ENCODE measurements at regions of chr5 and their contacts with region 1.

Region 1: GRCh38 chr5:149345147-149345875 is at the start of gene GRPEL2:
- DNase-seq: peak; percentile 80 to 87 (median 82)
- H3K4me3 ChIP-seq: peak within 1 kb of the TSS; percentile 83 to 92
- H3K4me3 Mint-ChIP-seq: peak within 1 kb of the TSS; percentile 91 to 99 (median 96)
- H3K27ac ChIP-seq: peak within 1 kb of the TSS; percentile 78
- H3K27ac Mint-ChIP-seq: peak within 1 kb of the TSS; percentile 87 to 99 (median 93)
- H3K4me1 ChIP-seq: peaks cover 53% of the 10 kb centered on the region
- H3K4me1 Mint-ChIP-seq: peaks cover 36 to 67% (median 55%) of the 10 kb centered on the region in 4 donors
- H3K27me3 ChIP-seq: no peaks in the 10 kb centered on the region
- H3K27me3 Mint-ChIP-seq: no peaks in the 10 kb centered on the region
- total RNA-seq, gene GRPEL2: 39.4 to 41.9 TPM

Region 2: DNA sequence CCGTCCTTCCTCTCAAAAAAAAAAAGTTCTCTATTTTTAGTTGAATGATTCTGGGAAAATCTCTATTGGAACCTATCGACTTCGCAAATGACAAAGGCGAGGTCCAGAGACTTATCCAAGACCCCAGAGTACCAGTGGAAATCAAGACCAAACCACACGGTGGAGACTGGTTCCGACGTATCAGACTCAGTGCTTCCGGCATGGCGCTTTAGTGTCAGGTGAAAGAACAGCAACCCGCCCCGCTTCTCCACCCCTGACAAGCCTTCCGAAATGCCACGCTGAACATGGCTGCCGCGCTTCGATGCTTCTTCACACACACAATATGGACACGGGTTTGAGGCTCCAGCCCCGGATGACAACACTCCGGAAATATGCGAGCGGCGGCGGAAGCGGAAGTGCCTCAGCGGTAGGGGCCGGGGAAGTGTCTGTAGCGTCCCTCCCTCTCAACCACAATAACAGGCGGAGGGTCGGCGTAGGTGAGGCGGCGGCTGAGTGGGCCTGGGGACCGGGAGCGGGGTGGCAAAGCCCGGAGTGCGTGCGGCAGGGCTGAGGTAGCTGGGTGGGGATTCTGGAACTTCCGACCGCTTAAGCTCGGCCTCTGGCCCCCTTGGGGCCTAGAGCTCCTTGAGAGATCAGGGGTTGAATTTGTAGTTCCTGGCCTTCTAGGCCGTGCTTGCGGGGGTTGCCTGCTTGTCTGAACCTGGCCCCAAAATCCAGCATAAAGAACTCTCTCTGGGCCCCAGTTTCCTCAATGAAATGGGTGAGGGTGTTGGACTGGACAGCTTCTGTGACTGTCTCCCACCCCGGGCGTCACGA is 961.5 kb before region 1 on chr5 and contains the start of gene FBXO38:
- CTCF ChIA-PET with region 1: no interaction called
- POLR2A ChIA-PET with region 1: no interaction called
- intact Hi-C with region 1: loop called (anchors 10 kb)
- DNase-seq: peak; percentile 97 to 99 (median 97)
- H3K4me3 ChIP-seq: peak within 1 kb of the TSS; percentile 82 to 86
- H3K4me3 Mint-ChIP-seq: peak within 1 kb of the TSS; percentile 86 to 97 (median 92)
- H3K27ac ChIP-seq: peak within 1 kb of the TSS; percentile 93
- H3K27ac Mint-ChIP-seq: peak within 1 kb of the TSS; percentile 90 to 100 (median 99)
- H3K4me1 ChIP-seq: peaks cover 47% of the 10 kb centered on the region
- H3K4me1 Mint-ChIP-seq: peaks cover 42 to 71% (median 59%) of the 10 kb centered on the region in 4 donors
- H3K27me3 ChIP-seq: no peaks in the 10 kb centered on the region
- H3K27me3 Mint-ChIP-seq: no peaks in the 10 kb centered on the region
- total RNA-seq, gene FBXO38: 77.3 to 78.3 TPM

Region 3: DNA sequence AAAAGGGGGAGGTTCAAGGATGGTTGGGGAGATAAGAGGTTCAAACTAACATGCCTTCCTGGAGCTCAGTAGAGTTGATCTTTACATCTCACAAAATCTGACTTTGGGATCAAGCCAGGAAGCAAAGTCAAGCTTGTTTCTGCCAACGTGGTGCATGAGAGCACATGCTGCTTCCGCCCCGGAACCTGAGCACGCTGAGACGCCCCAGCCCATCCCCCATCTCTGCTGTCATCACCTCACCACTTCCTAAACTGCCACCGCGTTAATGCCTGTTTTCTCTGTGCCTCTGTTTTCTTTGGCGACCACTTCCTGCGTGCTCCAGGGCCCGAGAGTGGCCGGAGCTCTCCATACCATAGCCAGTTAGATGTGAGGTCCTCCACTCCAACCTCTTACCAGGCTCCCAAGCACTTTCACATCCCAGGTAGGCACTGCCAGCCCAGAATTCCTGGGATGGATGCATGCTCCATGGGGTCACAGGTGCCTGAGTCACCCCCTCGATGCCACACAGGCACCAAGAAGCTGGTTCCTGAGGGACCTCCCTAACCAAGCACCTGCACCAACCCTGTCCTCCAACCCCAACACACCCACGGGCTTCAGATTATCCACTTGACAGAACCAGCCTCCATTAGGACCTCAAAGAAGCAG is 104.8 kb before region 1 on chr5:
- CTCF ChIA-PET with region 1: no interaction called
- POLR2A ChIA-PET with region 1: interaction called, 7 read pairs
- intact Hi-C with region 1: loop called (anchors 2 kb)
- DNase-seq: peak; percentile 78 to 91 (median 88)
- H3K4me3 ChIP-seq: peak overlapping the region; percentile 26 to 34
- H3K4me3 Mint-ChIP-seq: peak overlapping the region; percentile 25 to 80 (median 64)
- H3K27ac ChIP-seq: peak overlapping the region; percentile 49
- H3K27ac Mint-ChIP-seq: peak overlapping the region; percentile 81 to 95 (median 89)
- H3K4me1 ChIP-seq: peaks cover 35% of the 10 kb centered on the region
- H3K4me1 Mint-ChIP-seq: peaks cover 29 to 57% (median 37%) of the 10 kb centered on the region in 4 donors
- H3K27me3 ChIP-seq: no peaks in the 10 kb centered on the region
- H3K27me3 Mint-ChIP-seq: no peaks in the 10 kb centered on the region

Region 4: DNA sequence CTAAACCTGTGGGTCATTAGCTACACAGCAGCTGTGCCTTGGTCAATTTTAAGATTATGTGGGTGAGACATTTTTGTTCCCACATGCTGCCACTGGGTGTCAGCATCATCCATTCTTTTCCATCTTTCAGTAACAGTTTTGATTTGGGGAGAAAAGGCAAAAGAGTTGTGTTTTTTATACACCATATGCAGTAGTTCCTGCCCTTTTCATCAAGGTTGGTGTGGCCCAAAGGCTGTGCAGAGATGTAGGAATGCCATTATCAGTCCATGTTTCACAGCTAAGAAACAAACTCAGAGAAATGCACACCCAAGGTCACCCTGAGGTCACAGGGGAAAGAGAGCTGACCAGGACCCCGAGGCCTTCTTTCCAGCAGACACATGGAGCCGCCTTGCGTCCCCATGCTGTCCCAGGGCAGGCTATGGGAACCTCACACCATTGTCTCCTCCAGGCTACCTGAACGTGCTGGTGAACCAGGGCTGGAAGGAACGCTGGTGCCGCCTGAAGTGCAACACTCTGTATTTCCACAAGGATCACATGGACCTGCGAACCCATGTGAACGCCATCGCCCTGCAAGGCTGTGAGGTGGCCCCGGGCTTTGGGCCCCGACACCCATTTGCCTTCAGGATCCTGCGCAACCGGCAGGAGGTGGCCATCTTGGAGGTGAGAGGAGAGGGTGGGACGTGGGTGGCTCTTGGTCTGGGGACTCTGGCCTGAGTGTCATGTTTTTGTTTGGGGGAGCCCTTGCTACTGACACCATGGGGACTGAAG is 27.8 kb before region 1 on chr5:
- CTCF ChIA-PET with region 1: interaction called, 27 read pairs
- POLR2A ChIA-PET with region 1: interaction called, 3 read pairs
- intact Hi-C with region 1: loop called (anchors 1 kb)
- DNase-seq: peak in 4 of 5 donors; percentile 52 to 66 (median 56)
- H3K4me3 ChIP-seq: no peak overlapping the region
- H3K4me3 Mint-ChIP-seq: no peak overlapping the region
- H3K27ac ChIP-seq: no peak overlapping the region
- H3K27ac Mint-ChIP-seq: no peak overlapping the region
- H3K4me1 ChIP-seq: no peaks in the 10 kb centered on the region
- H3K4me1 Mint-ChIP-seq: peaks cover 0 to 3% (median 1%) of the 10 kb centered on the region in 4 donors
- H3K27me3 ChIP-seq: no peaks in the 10 kb centered on the region
- H3K27me3 Mint-ChIP-seq: no peaks in the 10 kb centered on the region

Region 5: DNA sequence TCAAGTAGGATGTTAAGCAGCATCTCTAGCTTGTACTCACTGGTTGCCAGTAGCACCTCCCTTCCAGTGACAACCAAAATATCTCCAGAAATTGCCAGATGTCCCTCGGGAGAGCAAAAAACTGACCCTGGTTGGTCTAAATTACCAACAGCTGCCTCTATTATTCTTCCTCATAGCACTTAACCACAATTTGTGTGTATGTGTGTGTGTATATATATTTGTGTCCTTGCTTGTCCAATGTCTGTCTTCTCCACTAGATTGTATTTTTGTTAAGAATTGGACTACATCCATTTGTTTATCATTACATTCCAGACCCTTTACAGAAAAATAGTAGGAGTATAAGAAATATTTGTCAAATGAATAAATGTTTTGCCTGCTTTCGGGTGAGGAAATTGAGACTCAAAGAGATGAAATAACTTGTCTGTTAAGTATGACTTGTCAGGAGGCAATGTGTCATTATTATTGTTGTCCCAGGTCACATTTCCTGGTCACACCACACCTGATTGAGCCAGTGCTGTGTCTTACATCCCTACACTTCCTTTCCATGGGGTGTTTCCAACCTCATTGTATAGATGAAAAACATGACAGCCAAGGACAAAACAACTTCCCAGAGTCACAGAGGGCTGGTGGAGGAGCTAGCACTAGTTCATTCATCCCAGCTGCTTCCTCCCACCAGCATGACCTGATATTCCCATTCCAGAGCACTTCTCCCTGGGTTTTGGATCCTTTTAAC is 11.4 kb before region 1 on chr5:
- CTCF ChIA-PET with region 1: interaction called, 7 read pairs
- POLR2A ChIA-PET with region 1: interaction called, 11 read pairs
- intact Hi-C with region 1: no loop called
- DNase-seq: no peak
- H3K4me3 ChIP-seq: no peak overlapping the region
- H3K4me3 Mint-ChIP-seq: no peak overlapping the region
- H3K27ac ChIP-seq: no peak overlapping the region
- H3K27ac Mint-ChIP-seq: peak overlapping the region in 1 of 7 donors; percentile 24
- H3K4me1 ChIP-seq: no peaks in the 10 kb centered on the region
- H3K4me1 Mint-ChIP-seq: peaks cover 0 to 3% (median 0%) of the 10 kb centered on the region in 4 donors
- H3K27me3 ChIP-seq: no peaks in the 10 kb centered on the region
- H3K27me3 Mint-ChIP-seq: no peaks in the 10 kb centered on the region

Region 6: DNA sequence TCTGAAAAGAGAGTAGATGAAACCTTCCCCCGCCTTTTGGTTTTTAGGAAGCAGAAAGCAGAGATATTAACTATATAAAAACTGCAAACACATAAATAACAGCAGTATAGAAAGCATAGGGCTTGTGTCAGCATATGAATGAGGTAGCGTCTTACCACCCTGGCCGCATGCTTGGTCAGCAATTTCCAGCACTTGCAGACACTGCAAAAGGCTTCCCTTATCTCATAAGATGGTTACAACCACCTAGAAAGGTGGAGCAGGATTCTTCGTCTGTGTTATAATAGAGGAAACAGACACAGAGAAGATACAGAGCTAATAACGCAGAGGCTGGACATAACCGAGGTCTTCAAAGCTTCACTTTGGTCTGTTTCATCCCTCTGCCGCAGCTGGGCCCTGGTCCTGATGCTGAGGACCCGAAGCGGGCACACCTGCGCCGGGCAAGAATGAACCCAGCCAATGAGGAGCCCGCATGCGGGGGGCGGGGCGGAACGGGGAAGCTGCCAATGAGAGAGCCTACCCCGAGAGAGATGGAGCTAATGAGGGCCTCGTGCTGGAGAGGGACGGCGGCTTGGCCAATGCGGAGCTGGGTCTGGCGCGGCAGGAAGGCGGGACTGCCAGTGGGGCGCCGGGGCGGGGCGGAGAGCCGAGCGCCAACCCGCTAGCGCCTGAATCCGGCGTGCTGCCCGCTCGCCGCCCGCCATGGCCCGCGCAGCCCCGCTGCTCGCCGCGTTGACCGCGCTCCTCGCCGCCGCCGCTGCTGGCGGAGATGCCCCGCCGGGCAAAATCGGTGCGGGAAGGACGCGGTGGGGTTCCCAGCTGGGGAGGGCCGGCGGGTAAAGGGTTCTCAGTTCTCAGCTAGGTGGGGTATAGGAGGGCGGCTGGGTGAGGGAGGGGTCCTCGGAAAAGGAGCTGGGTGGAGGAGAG is 12.3 kb after region 1 on chr5 and contains the start of gene PCYOX1L:
- CTCF ChIA-PET with region 1: interaction called, 14 read pairs
- POLR2A ChIA-PET with region 1: interaction called, 289 read pairs
- intact Hi-C with region 1: loop called (anchors 1 kb)
- DNase-seq: peak; percentile 91 to 97 (median 95)
- H3K4me3 ChIP-seq: peak within 1 kb of the TSS; percentile 70 to 82
- H3K4me3 Mint-ChIP-seq: peak within 1 kb of the TSS; percentile 94 to 98 (median 95)
- H3K27ac ChIP-seq: peak within 1 kb of the TSS; percentile 75
- H3K27ac Mint-ChIP-seq: peak within 1 kb of the TSS; percentile 92 to 98 (median 96)
- H3K4me1 ChIP-seq: peaks cover 71% of the 10 kb centered on the region
- H3K4me1 Mint-ChIP-seq: peaks cover 46 to 83% (median 63%) of the 10 kb centered on the region in 4 donors
- H3K27me3 ChIP-seq: no peaks in the 10 kb centered on the region
- H3K27me3 Mint-ChIP-seq: no peaks in the 10 kb centered on the region
- total RNA-seq, gene PCYOX1L: 40.4 to 43.9 TPM

Region 7: DNA sequence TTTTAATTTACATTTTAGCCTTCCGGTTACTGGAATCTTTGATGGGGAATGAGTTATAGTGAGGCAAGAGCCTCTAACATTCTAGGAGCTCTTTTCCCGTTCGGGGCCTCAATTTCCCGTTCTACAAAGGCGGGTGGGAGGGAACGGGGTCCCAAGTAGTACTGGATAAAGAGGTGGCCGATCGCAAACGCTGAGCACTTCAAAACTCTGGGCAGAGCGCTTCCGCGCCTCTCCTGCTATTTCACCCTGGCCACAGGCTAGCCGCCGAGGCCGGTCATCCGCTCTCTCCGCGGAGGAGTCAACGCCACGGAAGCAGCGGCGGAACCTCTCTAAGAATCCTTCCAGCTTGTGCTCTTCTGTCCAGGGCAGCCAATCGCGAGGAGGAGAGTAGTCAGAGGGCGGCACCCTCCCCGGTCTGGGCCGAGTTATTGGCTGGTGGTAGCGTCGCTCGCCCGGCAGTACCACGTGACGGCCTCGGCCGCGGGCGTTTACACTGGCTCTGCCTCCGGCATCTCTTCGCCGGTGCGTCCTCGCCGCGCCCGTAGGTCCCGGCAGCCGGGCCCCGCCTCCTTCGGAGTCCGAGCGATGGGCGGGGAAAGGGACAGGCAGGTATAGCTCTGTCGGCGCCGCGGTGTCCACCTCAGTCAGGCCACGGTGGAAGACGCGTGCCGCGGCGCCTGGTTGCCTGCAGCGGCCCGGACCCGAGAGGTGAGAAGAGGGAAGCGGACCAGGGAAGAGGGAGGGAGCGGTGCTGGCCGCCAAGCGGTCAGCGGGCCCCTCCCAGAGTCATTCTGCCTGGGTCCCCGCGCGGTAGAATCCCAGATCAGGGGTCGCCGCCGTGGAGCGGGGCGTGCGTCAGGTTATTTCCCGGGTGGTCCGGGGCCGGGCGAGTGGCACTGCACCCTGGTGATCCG is 615.2 kb after region 1 on chr5 and contains the start of gene SLC26A2:
- CTCF ChIA-PET with region 1: no interaction called
- POLR2A ChIA-PET with region 1: no interaction called
- intact Hi-C with region 1: loop called (anchors 10 kb)
- DNase-seq: peak; percentile 90 to 96 (median 91)
- H3K4me3 ChIP-seq: peak within 1 kb of the TSS; percentile 80 to 84
- H3K4me3 Mint-ChIP-seq: peak within 1 kb of the TSS; percentile 93 to 99 (median 98)
- H3K27ac ChIP-seq: peak within 1 kb of the TSS; percentile 72
- H3K27ac Mint-ChIP-seq: peak within 1 kb of the TSS; percentile 91 to 100 (median 98)
- H3K4me1 ChIP-seq: peaks cover 27% of the 10 kb centered on the region
- H3K4me1 Mint-ChIP-seq: peaks cover 27 to 37% (median 30%) of the 10 kb centered on the region in 4 donors
- H3K27me3 ChIP-seq: no peaks in the 10 kb centered on the region
- H3K27me3 Mint-ChIP-seq: no peaks in the 10 kb centered on the region
- total RNA-seq, gene SLC26A2: 14.2 to 14.3 TPM